ENCODE measurements at regions of chr3 and their contacts with region 1.

Region 1: GRCh38 chr3:124552239-124552638 is 178.0 kb upstream of the UMPS start:
- DNase-seq: no peak
- H3K4me3 Mint-ChIP-seq: no peak overlapping the region
- H3K27ac Mint-ChIP-seq: no peak overlapping the region
- H3K4me1 Mint-ChIP-seq: peaks cover 4% of the 10 kb centered on the region
- H3K27me3 Mint-ChIP-seq: peaks cover 48% of the 10 kb centered on the region

Region 2: DNA sequence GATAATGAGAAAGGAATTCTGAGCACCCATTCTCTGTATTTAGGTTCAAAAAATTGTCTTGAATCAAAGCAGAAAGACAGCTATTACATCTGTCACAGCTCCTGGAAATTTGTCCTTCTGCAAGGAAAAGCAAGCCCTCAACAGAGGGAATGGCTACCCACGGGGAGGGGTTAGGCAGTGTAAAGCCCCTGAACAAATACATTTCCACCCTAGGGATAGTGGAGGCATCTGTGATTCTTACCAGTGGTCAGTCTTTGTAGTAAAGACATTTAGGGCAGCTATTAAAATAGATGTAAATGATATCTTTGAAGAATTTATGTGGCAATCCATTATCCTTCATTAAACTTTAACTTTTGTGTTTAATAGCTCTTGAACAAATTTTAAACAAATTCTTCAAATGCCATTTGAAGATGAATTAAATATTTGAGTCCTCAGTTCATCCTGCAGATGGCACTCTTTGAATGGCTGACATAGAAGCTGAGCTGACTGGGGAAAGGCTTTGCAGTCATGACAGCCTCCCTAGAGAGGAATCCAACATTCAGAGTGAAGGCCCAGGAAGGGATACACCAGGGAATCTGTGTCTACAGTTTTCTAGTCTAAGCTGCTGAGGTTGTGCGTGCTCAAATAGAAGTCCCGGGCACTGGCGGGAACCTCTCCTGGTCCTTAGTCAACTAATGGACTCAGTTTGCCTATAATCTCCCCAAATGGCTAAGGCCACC is 200.7 kb before region 1 on chr3:
- intact Hi-C with region 1: loop called (anchors 5 kb)
- DNase-seq: no peak
- H3K4me3 Mint-ChIP-seq: no peak overlapping the region
- H3K27ac Mint-ChIP-seq: no peak overlapping the region
- H3K4me1 Mint-ChIP-seq: no peaks in the 10 kb centered on the region
- H3K27me3 Mint-ChIP-seq: peaks cover 9% of the 10 kb centered on the region

Region 3: GRCh38 chr3:124492811-124493210 is 59.4 kb before region 1 on chr3:
- intact Hi-C with region 1: loop called (anchors 5 kb)
- DNase-seq: peak; percentile 57
- H3K4me3 Mint-ChIP-seq: no peak overlapping the region
- H3K27ac Mint-ChIP-seq: no peak overlapping the region
- H3K4me1 Mint-ChIP-seq: peaks cover 3% of the 10 kb centered on the region
- H3K27me3 Mint-ChIP-seq: peaks cover 7% of the 10 kb centered on the region

Region 4: DNA sequence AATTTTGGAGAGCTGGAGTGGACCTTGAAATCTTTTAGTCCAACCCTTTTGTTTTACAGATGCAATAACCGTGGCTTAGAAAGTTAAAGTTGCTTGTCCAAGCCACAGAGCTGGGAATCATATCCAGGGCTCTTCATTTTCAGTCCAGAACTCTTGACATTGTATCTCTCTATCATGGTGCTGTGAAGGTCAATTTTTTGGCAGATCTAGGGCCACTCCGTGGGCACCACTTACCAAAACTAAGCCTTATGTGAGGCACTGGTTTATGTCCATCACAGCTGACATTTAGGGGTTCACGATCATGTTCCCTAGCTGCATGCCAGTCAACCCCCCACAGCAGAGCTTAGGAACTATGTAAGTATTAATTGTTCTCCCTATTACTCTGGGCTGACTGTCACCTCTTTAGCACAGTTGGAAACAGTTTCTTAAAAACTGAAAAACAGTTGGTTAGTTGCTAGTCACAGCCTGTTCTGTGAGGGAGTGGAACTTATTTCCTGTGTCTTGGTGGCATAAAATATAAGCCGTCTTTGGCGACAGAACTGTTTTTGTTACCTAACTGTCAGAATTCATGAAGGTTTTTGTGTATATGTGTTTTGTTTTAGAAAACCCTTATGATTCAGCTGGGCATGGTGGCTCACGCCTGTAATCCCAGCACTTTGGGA is 11.6 kb before region 1 on chr3:
- intact Hi-C with region 1: no loop called
- DNase-seq: no peak
- H3K4me3 Mint-ChIP-seq: no peak overlapping the region
- H3K27ac Mint-ChIP-seq: no peak overlapping the region
- H3K4me1 Mint-ChIP-seq: no peaks in the 10 kb centered on the region
- H3K27me3 Mint-ChIP-seq: peaks cover 4% of the 10 kb centered on the region

Measured in activated CD4-positive, alpha-beta T cell treated with anti-CD3 and anti-CD28 coated beads, Interleukin-2, amount 10 ng/mL, durations not matched to agents 24 days and 14 days (primary cell).